ENCODE measurements at regions of chr17 and their contacts with region 1.

Region 1: DNA sequence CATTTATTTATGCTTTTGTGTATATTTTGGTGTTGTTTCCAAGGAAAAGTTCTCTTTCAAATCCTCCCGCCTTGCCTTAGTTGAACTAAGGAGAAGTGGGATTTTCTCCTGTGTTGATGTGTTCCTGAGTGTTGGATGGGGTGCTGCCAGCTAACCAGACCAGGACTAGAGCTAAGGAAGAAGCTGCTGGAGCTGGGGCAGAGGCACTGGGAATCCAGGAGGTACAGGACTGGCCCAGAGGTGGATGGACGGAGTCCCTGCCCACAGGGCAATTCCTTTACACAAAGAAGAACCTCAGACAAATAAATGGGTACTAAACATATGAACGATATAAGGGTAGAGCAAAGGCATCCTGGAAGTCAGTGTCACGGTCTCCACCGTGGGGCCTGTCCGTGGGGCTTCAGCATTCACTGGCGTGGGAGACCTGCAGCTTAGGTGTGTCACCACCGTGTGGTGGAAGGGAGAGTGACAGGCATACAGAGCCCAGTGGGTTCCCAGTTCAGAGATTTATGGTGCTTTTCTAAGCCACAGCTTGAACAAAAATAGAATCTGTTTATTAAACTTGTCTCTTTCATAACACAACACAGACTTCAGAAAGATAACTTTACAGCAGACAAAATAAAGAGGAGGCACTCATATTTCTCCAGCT is 270.7 kb downstream of the NTN1 start:
- DNase-seq: peak; percentile 75
- ATAC-seq: no peak
- H3K4me3 Mint-ChIP-seq: no peak overlapping the region
- H3K27ac Mint-ChIP-seq: no peak overlapping the region
- H3K4me1 Mint-ChIP-seq: peaks cover 42% of the 10 kb centered on the region
- H3K27me3 Mint-ChIP-seq: no peaks in the 10 kb centered on the region

Region 2: GRCh38 chr17:8857919-8858318 is 434.1 kb before region 1 on chr17:
- CTCF ChIA-PET with region 1: no interaction called
- POLR2A ChIA-PET with region 1: no interaction called
- intact Hi-C with region 1: loop called in 1 of 2 experiments (anchors 5 kb)
- DNase-seq: peak; percentile 81
- ATAC-seq: peak; percentile 70
- H3K4me3 Mint-ChIP-seq: peak overlapping the region; percentile 6
- H3K27ac Mint-ChIP-seq: peak overlapping the region; percentile 80
- H3K4me1 Mint-ChIP-seq: peaks cover 54% of the 10 kb centered on the region
- H3K27me3 Mint-ChIP-seq: no peaks in the 10 kb centered on the region

Region 3: GRCh38 chr17:8991514-8992285 is 300.3 kb before region 1 on chr17:
- CTCF ChIA-PET with region 1: no interaction called
- POLR2A ChIA-PET with region 1: no interaction called
- intact Hi-C with region 1: loop called in 1 of 2 experiments (anchors 2 kb)
- DNase-seq: peak; percentile 85
- ATAC-seq: peak; percentile 83
- H3K4me3 Mint-ChIP-seq: no peak overlapping the region
- H3K27ac Mint-ChIP-seq: no peak overlapping the region
- H3K4me1 Mint-ChIP-seq: peaks cover 6% of the 10 kb centered on the region
- H3K27me3 Mint-ChIP-seq: peaks cover 2% of the 10 kb centered on the region

Region 4: GRCh38 chr17:9115446-9116191 is 176.4 kb before region 1 on chr17:
- CTCF ChIA-PET with region 1: interaction called, 7 read pairs
- POLR2A ChIA-PET with region 1: no interaction called
- intact Hi-C with region 1: loop called (anchors 1 kb)
- DNase-seq: peak; percentile 82
- ATAC-seq: peak; percentile 95
- H3K4me3 Mint-ChIP-seq: peak overlapping the region; percentile 59
- H3K27ac Mint-ChIP-seq: peak overlapping the region; percentile 80
- H3K4me1 Mint-ChIP-seq: peaks cover 16% of the 10 kb centered on the region
- H3K27me3 Mint-ChIP-seq: no peaks in the 10 kb centered on the region

Region 5: GRCh38 chr17:9150446-9151090 is 141.5 kb before region 1 on chr17:
- CTCF ChIA-PET with region 1: no interaction called
- POLR2A ChIA-PET with region 1: no interaction called
- intact Hi-C with region 1: no loop called
- DNase-seq: no peak
- ATAC-seq: no peak
- H3K4me3 Mint-ChIP-seq: no peak overlapping the region
- H3K27ac Mint-ChIP-seq: no peak overlapping the region
- H3K4me1 Mint-ChIP-seq: no peaks in the 10 kb centered on the region
- H3K27me3 Mint-ChIP-seq: peaks cover 4% of the 10 kb centered on the region

Region 6: GRCh38 chr17:9239793-9240658 is 52.0 kb before region 1 on chr17:
- CTCF ChIA-PET with region 1: interaction called, 4 read pairs
- POLR2A ChIA-PET with region 1: no interaction called
- intact Hi-C with region 1: loop called in 1 of 2 experiments (anchors 1 kb)
- DNase-seq: peak; percentile 85
- ATAC-seq: peak; percentile 84
- H3K4me3 Mint-ChIP-seq: peak overlapping the region; percentile 73
- H3K27ac Mint-ChIP-seq: peak overlapping the region; percentile 82
- H3K4me1 Mint-ChIP-seq: peaks cover 20% of the 10 kb centered on the region
- H3K27me3 Mint-ChIP-seq: no peaks in the 10 kb centered on the region

Region 7: GRCh38 chr17:9273428-9274391 is 18.3 kb before region 1 on chr17:
- CTCF ChIA-PET with region 1: interaction called, 13 read pairs
- POLR2A ChIA-PET with region 1: interaction called, 10 read pairs
- intact Hi-C with region 1: loop called (anchors 1 kb)
- DNase-seq: peak; percentile 73
- ATAC-seq: peak; percentile 94
- H3K4me3 Mint-ChIP-seq: peak overlapping the region; percentile 55
- H3K27ac Mint-ChIP-seq: peak overlapping the region; percentile 91
- H3K4me1 Mint-ChIP-seq: peaks cover 32% of the 10 kb centered on the region
- H3K27me3 Mint-ChIP-seq: no peaks in the 10 kb centered on the region